HepG2 (cell line): ENCODE measurements at regions of chr17 and their contacts with region 1.

Region 1: DNA sequence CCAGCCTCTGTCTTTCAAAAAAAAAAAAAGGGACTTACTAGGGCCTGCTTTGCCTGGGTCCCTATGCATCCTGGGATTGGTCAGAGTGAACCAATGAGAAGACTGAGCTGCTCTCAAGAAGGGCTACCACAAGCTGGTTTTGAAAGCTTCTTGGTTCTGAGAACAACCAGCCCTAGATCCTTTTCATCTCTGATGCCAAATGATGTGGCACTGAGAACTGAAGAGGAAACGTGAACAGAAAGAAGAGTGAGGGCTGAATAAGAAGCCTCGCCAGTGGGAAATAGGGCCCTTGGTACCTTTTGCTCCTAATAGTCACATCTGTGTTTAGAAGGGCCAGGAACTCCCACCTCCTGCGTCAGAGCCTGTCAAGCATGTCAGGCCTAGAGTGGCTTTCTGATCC is 10.7 kb downstream of the TACO1 start:
- DNase-seq: no peak
- ATAC-seq: no peak
- H3K4me3 ChIP-seq: no peak overlapping the region
- H3K27ac ChIP-seq: no peak overlapping the region
- H3K4me1 ChIP-seq: no peaks in the 10 kb centered on the region
- H3K27me3 ChIP-seq: no peaks in the 10 kb centered on the region
- CTCF ChIP-seq: no peak
- EP300 ChIP-seq: no peak
- POLR2A ChIP-seq: no peak
- RAD21 ChIP-seq: no peak

Region 2: DNA sequence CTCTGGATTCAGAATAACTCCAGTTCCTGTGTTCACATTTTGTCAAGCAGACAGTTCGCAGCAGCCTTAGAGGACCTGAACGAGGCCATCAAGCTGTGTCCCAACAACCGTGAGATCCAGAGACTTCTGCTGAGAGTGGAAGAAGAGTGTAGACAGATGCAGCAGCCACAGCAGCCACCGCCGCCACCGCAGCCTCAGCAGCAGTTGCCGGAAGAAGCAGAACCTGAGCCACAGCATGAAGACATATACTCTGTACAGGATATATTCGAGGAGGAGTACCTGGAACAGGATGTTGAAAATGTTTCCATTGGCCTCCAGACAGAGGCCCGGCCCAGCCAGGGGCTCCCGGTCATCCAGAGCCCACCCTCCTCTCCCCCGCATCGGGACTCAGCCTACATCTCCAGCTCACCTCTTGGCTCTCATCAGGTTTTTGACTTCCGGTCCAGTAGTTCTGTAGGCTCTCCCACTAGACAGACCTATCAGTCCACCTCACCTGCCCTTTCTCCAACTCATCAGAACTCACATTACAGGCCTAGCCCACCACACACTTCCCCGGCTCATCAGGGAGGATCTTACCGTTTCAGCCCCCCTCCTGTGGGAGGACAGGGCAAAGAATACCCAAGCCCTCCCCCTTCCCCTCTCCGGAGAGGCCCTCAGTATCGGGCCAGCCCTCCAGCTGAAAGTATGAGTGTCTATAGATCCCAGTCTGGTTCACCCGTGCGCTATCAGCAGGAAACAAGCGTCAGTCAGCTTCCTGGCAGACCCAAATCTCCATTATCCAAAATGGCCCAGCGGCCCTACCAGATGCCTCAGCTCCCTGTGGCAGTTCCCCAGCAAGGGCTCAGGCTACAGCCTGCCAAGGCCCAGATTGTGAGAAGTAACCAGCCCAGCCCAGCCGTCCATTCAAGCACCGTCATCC is 191.1 kb before region 1 on chr17:
- CTCF ChIA-PET with region 1: interaction called, 40 read pairs
- POLR2A ChIA-PET with region 1: no interaction called
- in situ Hi-C with region 1: loop called (anchors 5 kb)
- intact Hi-C with region 1: loop called (anchors 1 kb)
- DNase-seq: no peak
- ATAC-seq: no peak
- H3K4me3 ChIP-seq: no peak overlapping the region
- H3K27ac ChIP-seq: no peak overlapping the region
- H3K4me1 ChIP-seq: no peaks in the 10 kb centered on the region
- H3K27me3 ChIP-seq: peaks cover 20 to 98% of the 10 kb centered on the region in 2 experiments
- CTCF ChIP-seq: no peak
- EP300 ChIP-seq: no peak
- POLR2A ChIP-seq: no peak
- RAD21 ChIP-seq: no peak

Region 3: DNA sequence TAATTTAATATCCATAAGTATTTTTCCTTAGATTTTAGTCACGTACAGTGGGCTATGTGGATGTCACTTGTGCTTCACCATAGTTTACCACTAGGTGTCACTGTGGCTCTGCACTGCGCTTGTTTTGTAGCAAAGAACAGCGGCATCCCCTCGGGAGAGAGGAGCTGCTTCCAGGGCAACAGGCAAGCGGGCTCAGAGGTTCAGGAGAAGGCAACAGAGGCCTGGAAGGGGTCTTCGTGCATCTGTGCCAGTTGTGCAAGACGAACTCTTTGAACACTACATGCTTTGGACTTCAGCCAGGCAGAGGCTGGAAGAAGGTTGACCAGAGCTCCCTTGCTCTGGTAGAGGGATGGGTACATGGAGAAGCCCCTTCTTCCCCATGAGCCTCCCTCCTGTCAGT is 185.9 kb before region 1 on chr17:
- CTCF ChIA-PET with region 1: interaction called, 40 read pairs
- POLR2A ChIA-PET with region 1: interaction called, 3 read pairs
- in situ Hi-C with region 1: loop called (anchors 5 kb)
- intact Hi-C with region 1: loop called (anchors 1 kb)
- DNase-seq: peak; percentile 80
- ATAC-seq: peak; percentile 86
- H3K4me3 ChIP-seq: no peak overlapping the region
- H3K27ac ChIP-seq: no peak overlapping the region
- H3K4me1 ChIP-seq: peaks cover 21% of the 10 kb centered on the region
- H3K27me3 ChIP-seq: peaks cover 13 to 65% of the 10 kb centered on the region in 2 experiments; a peak in 4 of 5 replicates
- CTCF ChIP-seq: peak; percentile 97
- EP300 ChIP-seq: no peak
- POLR2A ChIP-seq: no peak
- RAD21 ChIP-seq: peak; percentile 97

Region 4: GRCh38 chr17:63478791-63479494 is 132.4 kb before region 1 on chr17:
- CTCF ChIA-PET with region 1: interaction called, 3 read pairs
- POLR2A ChIA-PET with region 1: no interaction called
- in situ Hi-C with region 1: no loop called
- intact Hi-C with region 1: loop called (anchors 2 kb)
- DNase-seq: peak; percentile 80
- ATAC-seq: peak; percentile 88
- H3K4me3 ChIP-seq: no peak overlapping the region
- H3K27ac ChIP-seq: no peak overlapping the region
- H3K4me1 ChIP-seq: peaks cover 28% of the 10 kb centered on the region
- H3K27me3 ChIP-seq: peaks cover 27 to 87% of the 10 kb centered on the region in 2 experiments
- CTCF ChIP-seq: peak; percentile 98
- EP300 ChIP-seq: no peak
- POLR2A ChIP-seq: no peak
- RAD21 ChIP-seq: peak; percentile 88

Region 5: DNA sequence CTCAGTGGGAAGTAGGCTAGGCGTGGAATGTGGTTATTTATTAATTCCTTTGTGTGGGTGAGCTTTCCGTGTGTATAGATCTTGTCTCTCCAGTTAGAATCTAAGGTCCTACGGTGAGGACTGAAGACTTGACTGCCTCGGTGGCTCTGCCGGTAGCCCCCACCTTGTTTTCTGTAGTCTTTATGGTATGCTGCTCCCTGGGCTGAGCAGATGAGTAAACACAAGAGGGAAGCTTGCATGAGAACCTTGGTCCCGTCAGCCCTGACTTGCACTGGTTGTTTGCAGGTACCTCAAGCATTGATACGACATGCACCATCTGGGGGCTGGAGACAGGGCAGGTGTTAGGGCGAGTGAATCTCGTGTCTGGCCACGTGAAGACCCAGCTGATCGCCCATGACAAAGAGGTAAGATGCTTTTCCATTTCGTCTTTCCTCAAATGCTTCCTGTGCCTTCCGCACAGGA is 31.8 kb before region 1 on chr17:
- CTCF ChIA-PET with region 1: no interaction called
- POLR2A ChIA-PET with region 1: interaction called, 4 read pairs
- in situ Hi-C with region 1: no loop called
- intact Hi-C with region 1: loop called (anchors 5 kb)
- DNase-seq: peak; percentile 83
- ATAC-seq: peak; percentile 58
- H3K4me3 ChIP-seq: peak overlapping the region in 2 of 3 experiments; percentile 8 to 33; a peak in 2 of 6 replicates
- H3K27ac ChIP-seq: peak overlapping the region; percentile 83
- H3K4me1 ChIP-seq: peaks cover 46% of the 10 kb centered on the region
- H3K27me3 ChIP-seq: no peaks in the 10 kb centered on the region
- CTCF ChIP-seq: peak; percentile 31; the same call in 1 of the 2 replicates
- EP300 ChIP-seq: peak in 1 of 2 experiments; percentile 53; a peak in 2 of 4 replicates
- POLR2A ChIP-seq: no peak
- RAD21 ChIP-seq: no peak

Region 6: DNA sequence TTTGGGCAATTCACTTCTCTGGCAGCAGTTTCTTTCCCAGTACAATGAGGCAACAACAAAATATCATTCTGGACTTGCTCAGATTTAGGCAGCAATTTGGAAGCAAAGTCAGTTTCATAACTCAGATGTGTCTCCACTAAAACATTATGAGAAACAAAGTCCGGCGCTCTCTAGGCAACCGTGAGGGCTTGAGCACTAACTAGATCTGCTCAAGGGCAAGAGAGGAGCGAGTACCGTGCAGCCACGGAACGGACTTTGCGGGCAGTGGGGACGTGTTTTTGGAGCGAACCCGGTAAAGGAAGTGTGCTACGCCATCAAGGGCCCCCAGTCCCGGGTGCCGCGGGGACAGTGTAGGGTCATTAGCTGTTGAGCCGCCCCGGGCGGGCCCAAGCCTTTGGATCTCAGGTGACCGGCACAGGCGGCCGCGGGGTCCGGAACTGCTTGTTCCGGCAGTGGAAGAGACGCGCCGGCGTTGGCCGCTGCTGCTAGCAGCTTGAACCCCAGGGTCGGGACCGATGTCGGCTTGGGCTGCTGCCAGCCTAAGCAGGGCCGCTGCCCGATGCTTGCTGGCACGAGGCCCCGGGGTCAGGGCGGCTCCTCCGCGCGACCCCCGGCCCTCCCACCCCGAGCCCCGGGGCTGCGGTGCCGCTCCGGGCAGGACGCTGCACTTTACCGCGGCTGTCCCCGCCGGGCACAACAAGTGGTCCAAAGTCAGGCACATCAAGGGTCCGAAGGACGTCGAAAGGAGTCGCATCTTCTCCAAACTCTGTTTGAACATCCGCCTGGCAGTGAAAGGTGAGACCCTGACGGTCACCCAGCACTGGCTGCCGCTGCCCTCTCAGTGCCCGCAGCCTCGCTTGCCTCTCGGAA is 10.6 kb before region 1 on chr17 and contains the start of gene TACO1:
- CTCF ChIA-PET with region 1: no interaction called
- POLR2A ChIA-PET with region 1: interaction called, 10 read pairs
- in situ Hi-C with region 1: no loop called
- intact Hi-C with region 1: no loop called
- DNase-seq: peak; percentile 83
- ATAC-seq: peak; percentile 94
- H3K4me3 ChIP-seq: peak within 1 kb of the TSS; percentile 78 to 90 (median 81)
- H3K27ac ChIP-seq: peak within 1 kb of the TSS; percentile 88
- H3K4me1 ChIP-seq: peaks cover 23% of the 10 kb centered on the region
- H3K27me3 ChIP-seq: no peaks in the 10 kb centered on the region; a peak in 1 of 5 replicates
- CTCF ChIP-seq: peak; percentile 41
- EP300 ChIP-seq: peak; percentile 74 to 81
- POLR2A ChIP-seq: peak; percentile 75 to 88
- RAD21 ChIP-seq: peak; percentile 75
- total RNA-seq, gene TACO1: 53.6 and 57.6 TPM in 2 replicates

Region 7: GRCh38 chr17:63621766-63622519 is 10.6 kb after region 1 on chr17 and contains the start of gene MAP3K3:
- CTCF ChIA-PET with region 1: no interaction called
- POLR2A ChIA-PET with region 1: interaction called, 19 read pairs
- in situ Hi-C with region 1: no loop called
- intact Hi-C with region 1: no loop called
- DNase-seq: peak; percentile 100
- ATAC-seq: peak; percentile 95
- H3K4me3 ChIP-seq: peak within 1 kb of the TSS; percentile 80 to 97 (median 85)
- H3K27ac ChIP-seq: peak within 1 kb of the TSS; percentile 42
- H3K4me1 ChIP-seq: peaks cover 43% of the 10 kb centered on the region
- H3K27me3 ChIP-seq: peaks cover 0 to 4% of the 10 kb centered on the region in 2 experiments; a peak in 1 of 5 replicates
- CTCF ChIP-seq: peak; percentile 58
- EP300 ChIP-seq: no peak
- POLR2A ChIP-seq: peak; percentile 68 to 94
- RAD21 ChIP-seq: peak; percentile 37; the same call in 1 of the 2 replicates
- total RNA-seq, gene MAP3K3: 15.9 and 21.8 TPM in 2 replicates

Region 8: DNA sequence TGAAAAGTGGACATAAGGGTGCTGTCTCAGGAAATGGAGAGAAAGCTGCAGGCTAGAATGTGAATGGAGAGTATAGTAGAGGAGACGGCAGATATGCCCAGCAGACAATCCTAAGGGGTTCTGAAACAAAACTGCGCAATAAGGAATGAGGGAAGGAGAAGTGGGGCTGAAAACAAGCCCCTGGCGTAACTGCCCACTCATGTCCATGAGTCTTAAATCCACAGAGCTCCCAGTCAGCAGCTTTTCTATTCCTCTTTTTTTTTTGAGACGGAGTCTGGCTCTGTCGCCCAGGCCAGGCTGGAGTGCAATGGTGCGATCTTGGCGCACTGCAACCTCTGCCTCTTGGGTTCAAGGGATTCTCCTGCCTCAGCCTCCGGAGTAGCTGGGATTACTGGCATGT is 124.3 kb after region 1 on chr17:
- CTCF ChIA-PET with region 1: no interaction called
- POLR2A ChIA-PET with region 1: no interaction called
- in situ Hi-C with region 1: no loop called
- intact Hi-C with region 1: no loop called
- DNase-seq: no peak
- ATAC-seq: no peak
- H3K4me3 ChIP-seq: no peak overlapping the region
- H3K27ac ChIP-seq: no peak overlapping the region
- H3K4me1 ChIP-seq: peaks cover 6% of the 10 kb centered on the region; the same call in 1 of the 2 replicates
- H3K27me3 ChIP-seq: no peaks in the 10 kb centered on the region
- CTCF ChIP-seq: no peak
- EP300 ChIP-seq: no peak
- POLR2A ChIP-seq: no peak
- RAD21 ChIP-seq: no peak